T-cell (primary cell): ENCODE measurements at regions of chr3 and their contacts with region 1.

Region 1: DNA sequence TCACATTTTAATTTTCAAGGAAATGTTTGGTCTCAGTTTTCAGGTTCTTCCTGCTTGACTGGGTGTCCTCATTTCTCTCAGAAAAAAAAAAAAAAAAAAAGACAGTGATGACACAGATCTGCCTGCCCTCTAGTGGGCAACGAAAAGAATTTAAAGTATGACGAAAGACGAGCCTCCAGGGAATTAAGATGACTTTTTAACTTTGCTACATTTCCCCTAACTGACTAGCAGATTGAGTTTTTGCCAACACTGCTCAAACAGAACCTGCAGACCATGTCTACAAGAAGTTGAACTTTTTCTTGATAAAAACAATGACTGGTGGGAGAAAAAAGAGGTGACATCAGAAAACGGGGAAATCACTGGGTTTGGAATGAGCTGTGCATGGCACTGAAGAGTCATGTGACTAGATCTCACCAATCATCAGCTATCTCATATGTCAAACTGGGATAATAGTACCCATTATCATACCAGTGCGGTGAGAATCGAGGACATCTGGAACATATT is 40.8 kb downstream of the EOMES start:
- DNase-seq: peak in 21 of 35 experiments; percentile 3 to 79 (median 25)
- ATAC-seq: peak; percentile 42 to 83 (median 66)
- H3K4me3 ChIP-seq: no peak overlapping the region
- H3K4me3 Mint-ChIP-seq: peak overlapping the region; percentile 8 to 51 (median 14)
- H3K27ac ChIP-seq: no peak overlapping the region
- H3K27ac Mint-ChIP-seq: peak overlapping the region in 1 of 2 donors; percentile 0
- H3K4me1 ChIP-seq: peaks cover 0 to 7% of the 10 kb centered on the region in 2 experiments
- H3K4me1 Mint-ChIP-seq: peaks cover 7 to 16% (median 9%) of the 10 kb centered on the region in 3 donors
- H3K27me3 ChIP-seq: peaks cover 0 to 2% of the 10 kb centered on the region in 2 experiments
- H3K27me3 Mint-ChIP-seq: peaks cover 3% of the 10 kb centered on the region in 2 donors

Region 2: DNA sequence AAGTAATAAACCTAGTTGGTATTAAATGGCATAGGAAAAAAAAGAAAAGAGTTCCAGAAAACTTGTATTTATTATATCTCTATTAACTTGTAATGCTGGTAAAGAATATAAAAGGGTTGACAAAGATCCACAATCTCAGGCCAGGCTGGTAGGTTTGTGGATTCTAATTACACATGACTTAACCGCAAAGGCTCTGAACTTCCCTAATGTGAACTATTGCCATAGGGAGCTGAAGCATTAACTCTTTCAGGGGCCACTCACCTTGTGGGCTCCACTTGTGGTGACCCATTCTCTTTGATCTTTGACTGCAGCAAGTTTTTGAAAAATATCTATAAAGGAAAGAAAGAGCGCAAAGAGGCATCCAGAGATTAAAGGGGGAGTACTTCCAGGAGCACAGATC is 370.6 kb before region 1 on chr3:
- CTCF ChIA-PET with region 1: interaction called, 9 to 12 read pairs
- POLR2A ChIA-PET with region 1: no interaction called
- DNase-seq: no peak
- ATAC-seq: no peak
- H3K4me3 ChIP-seq: no peak overlapping the region
- H3K4me3 Mint-ChIP-seq: no peak overlapping the region
- H3K27ac ChIP-seq: no peak overlapping the region
- H3K27ac Mint-ChIP-seq: no peak overlapping the region
- H3K4me1 ChIP-seq: no peaks in the 10 kb centered on the region
- H3K4me1 Mint-ChIP-seq: no peaks in the 10 kb centered on the region
- H3K27me3 ChIP-seq: no peaks in the 10 kb centered on the region
- H3K27me3 Mint-ChIP-seq: peaks cover 0 to 3% of the 10 kb centered on the region in 2 donors

Region 3: DNA sequence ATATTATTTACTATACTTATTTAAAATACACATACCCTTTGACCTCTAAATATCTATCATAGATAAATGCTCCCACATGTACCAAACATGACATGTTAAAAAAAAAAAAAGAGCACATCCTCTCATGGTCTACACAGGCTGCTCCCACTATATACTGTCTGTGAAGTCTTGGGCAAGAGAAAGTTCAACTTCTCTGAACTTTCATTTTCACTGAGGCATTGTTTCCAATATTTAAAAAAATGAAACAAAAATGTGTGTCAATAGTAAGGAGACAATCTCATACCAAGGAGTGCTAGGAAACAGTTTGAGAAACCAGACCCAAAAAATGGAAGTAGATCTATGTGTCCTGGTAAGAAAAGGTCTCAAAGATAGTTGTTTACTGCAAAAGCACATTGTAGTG is 226.4 kb before region 1 on chr3:
- CTCF ChIA-PET with region 1: interaction called in 1 of 2 experiments, 11 read pairs
- POLR2A ChIA-PET with region 1: no interaction called
- DNase-seq: peak in 1 of 35 experiments; percentile 8
- ATAC-seq: peak in 1 of 4 experiments; percentile 50
- H3K4me3 ChIP-seq: no peak overlapping the region
- H3K4me3 Mint-ChIP-seq: no peak overlapping the region
- H3K27ac ChIP-seq: no peak overlapping the region
- H3K27ac Mint-ChIP-seq: peak overlapping the region in 1 of 2 donors; percentile 7
- H3K4me1 ChIP-seq: peaks cover 0 to 3% of the 10 kb centered on the region in 2 experiments
- H3K4me1 Mint-ChIP-seq: peaks cover 60 to 72% (median 67%) of the 10 kb centered on the region in 3 donors
- H3K27me3 ChIP-seq: no peaks in the 10 kb centered on the region
- H3K27me3 Mint-ChIP-seq: no peaks in the 10 kb centered on the region

Region 4: DNA sequence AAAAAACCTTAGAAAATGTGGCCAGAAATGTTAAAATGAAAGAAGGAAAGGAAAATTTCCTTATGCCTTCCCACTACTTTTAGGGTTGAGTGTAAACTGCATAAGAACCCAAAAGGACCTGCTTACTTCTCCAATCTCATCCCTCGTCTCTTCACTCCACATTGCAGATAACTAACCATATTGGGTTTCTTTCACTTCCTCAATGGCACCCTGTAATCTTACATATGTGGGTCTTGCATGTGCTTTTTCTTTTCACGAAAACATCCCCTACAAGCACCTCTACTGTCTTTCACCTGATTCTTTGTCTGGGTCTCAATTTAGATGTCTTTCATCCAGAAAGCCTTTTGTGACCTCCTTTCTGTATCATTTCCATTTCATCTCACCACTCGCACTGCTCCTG is 17.8 kb after region 1 on chr3:
- CTCF ChIA-PET with region 1: interaction called, 3 to 5 read pairs
- POLR2A ChIA-PET with region 1: interaction called in 1 of 2 experiments, 14 read pairs
- DNase-seq: no peak
- ATAC-seq: no peak
- H3K4me3 ChIP-seq: no peak overlapping the region
- H3K4me3 Mint-ChIP-seq: no peak overlapping the region
- H3K27ac ChIP-seq: no peak overlapping the region
- H3K27ac Mint-ChIP-seq: no peak overlapping the region
- H3K4me1 ChIP-seq: no peaks in the 10 kb centered on the region
- H3K4me1 Mint-ChIP-seq: no peaks in the 10 kb centered on the region
- H3K27me3 ChIP-seq: no peaks in the 10 kb centered on the region
- H3K27me3 Mint-ChIP-seq: no peaks in the 10 kb centered on the region

Region 5: DNA sequence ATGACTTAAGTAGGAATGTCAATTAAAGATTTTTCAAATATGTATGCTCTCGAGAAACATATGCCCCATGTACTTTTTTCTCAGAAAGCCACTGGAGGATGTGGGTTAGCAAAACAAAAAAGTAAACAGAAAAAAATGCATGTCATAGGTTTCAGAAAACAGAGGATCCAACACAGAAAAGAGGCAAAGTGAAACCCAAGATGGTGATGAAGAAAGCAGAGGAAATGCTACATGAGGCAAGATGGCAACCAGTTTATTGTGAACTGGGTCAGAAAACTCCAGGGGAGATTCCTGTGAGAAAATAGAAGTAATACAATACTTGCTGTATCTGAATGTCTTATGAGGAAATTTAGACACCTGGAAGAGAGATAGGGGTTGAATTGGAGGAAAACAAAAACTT is 71.6 kb after region 1 on chr3:
- CTCF ChIA-PET with region 1: no interaction called
- POLR2A ChIA-PET with region 1: no interaction called
- DNase-seq: peak in 1 of 35 experiments; percentile 16
- ATAC-seq: peak in 2 of 4 experiments; percentile 19 to 36
- H3K4me3 ChIP-seq: no peak overlapping the region
- H3K4me3 Mint-ChIP-seq: no peak overlapping the region
- H3K27ac ChIP-seq: peak overlapping the region; percentile 20
- H3K27ac Mint-ChIP-seq: peak overlapping the region; percentile 0 to 17
- H3K4me1 ChIP-seq: no peaks in the 10 kb centered on the region
- H3K4me1 Mint-ChIP-seq: peaks cover 12 to 27% (median 16%) of the 10 kb centered on the region in 3 donors
- H3K27me3 ChIP-seq: no peaks in the 10 kb centered on the region
- H3K27me3 Mint-ChIP-seq: no peaks in the 10 kb centered on the region

Region 6: GRCh38 chr3:28328188-28329151 is 647.2 kb after region 1 on chr3:
- CTCF ChIA-PET with region 1: interaction called, 5 to 21 read pairs
- POLR2A ChIA-PET with region 1: no interaction called
- DNase-seq: peak in 1 of 35 experiments; percentile 72
- ATAC-seq: peak in 2 of 4 experiments; percentile 56 to 64
- H3K4me3 ChIP-seq: no peak overlapping the region
- H3K4me3 Mint-ChIP-seq: no peak overlapping the region
- H3K27ac ChIP-seq: no peak overlapping the region
- H3K27ac Mint-ChIP-seq: no peak overlapping the region
- H3K4me1 ChIP-seq: peaks cover 0 to 4% of the 10 kb centered on the region in 2 experiments
- H3K4me1 Mint-ChIP-seq: peaks cover 0 to 30% (median 23%) of the 10 kb centered on the region in 3 donors
- H3K27me3 ChIP-seq: no peaks in the 10 kb centered on the region
- H3K27me3 Mint-ChIP-seq: no peaks in the 10 kb centered on the region